Heart left ventricle (tissue), 16 donors: ENCODE measurements at regions of chr12 and their contacts with region 1.

Region 1: GRCh38 chr12:121089031-121089812 is 43.5 kb upstream of the P2RX7 start:
- DNase-seq: no peak
- ATAC-seq: peak in 2 of 4 donors; percentile 20 to 65
- H3K4me3 ChIP-seq: no peak overlapping the region
- H3K27ac ChIP-seq: no peak overlapping the region
- H3K4me1 ChIP-seq: peaks cover 0 to 21% (median 4%) of the 10 kb centered on the region in 12 donors
- H3K27me3 ChIP-seq: no peaks in the 10 kb centered on the region
- CTCF ChIP-seq: no peak
- POLR2A ChIP-seq: no peak

Region 2: DNA sequence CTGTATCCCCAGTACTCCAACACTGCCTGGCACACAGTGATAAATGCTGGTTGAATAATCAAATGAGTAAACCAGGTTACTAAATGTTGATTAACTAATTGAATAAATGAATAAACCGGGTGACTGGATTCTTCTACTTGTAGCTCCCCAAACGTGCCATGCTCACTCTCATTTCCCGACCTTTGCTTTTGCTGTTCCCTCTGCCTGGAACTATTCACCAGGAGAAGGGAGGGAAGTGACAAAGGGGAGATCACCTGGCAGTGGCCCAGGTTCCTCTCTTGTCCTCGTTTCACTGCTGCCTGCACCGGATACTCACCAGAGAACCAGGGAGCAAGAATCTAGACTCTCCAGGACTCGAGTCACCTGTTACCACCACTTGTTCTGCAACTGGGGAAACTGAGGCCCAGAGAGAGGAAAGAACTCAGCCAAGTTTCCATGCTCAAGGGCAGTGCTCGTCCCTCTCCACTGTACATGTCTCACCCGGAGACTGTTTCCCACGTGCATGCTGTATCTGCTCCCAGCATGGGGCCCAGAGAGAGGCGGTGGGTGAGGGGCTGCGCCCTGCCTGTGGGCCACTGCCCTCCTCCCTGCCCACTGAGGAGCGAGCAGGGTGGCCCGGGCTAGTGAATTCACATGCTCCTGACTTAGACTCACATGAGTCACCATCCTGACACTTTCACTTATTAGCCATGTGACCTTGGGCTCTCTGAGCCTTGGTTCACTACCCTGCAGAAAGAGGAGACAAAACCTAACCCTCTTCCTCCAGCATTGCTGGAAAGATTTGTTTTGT is 490.4 kb before region 1 on chr12:
- intact Hi-C with region 1: loop called in 1 of 10 experiments (anchors 10 kb)
- DNase-seq: no peak
- ATAC-seq: peak; percentile 67 to 86 (median 79)
- H3K4me3 ChIP-seq: no peak overlapping the region
- H3K27ac ChIP-seq: no peak overlapping the region
- H3K4me1 ChIP-seq: peaks cover 0 to 9% (median 4%) of the 10 kb centered on the region in 12 donors
- H3K27me3 ChIP-seq: peaks cover 0 to 6% (median 0%) of the 10 kb centered on the region in 9 donors
- CTCF ChIP-seq: no peak
- POLR2A ChIP-seq: no peak